Activated CD8-positive, alpha-beta T cell treated with anti-CD3 and anti-CD28 coated beads for 36 hours (primary cell): ENCODE measurements at regions of chr2 and their contacts with region 1.

Region 1: DNA sequence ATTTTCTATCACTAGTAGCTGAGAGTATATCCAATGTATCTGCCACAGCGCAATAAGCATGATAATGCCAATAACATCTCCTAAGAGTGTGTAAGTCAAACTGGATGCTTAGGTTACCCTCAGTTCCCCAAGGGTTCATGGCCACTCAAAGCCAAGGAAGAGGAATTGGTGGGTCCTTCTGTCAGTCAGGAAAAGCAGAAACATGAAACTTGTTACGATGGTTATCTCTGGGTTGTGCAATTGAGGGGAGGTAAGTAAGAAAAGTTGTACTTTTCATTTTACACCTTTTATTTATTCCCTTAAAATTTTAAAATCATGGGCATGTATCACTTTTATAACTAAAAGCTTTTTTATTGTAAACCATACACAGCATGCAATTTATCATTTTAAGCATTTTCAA is 10.1 kb upstream of the GAD1 start:
- DNase-seq: no peak
- ATAC-seq: no peak
- H3K4me3 Mint-ChIP-seq: no peak overlapping the region
- H3K27ac Mint-ChIP-seq: no peak overlapping the region
- H3K4me1 Mint-ChIP-seq: no peaks in the 10 kb centered on the region
- H3K27me3 Mint-ChIP-seq: peaks cover 5% of the 10 kb centered on the region
- CTCF ChIP-seq: no peak

Region 2: GRCh38 chr2:170243118-170243837 is 563.3 kb before region 1 on chr2:
- CTCF ChIA-PET with region 1: no interaction called
- POLR2A ChIA-PET with region 1: no interaction called
- intact Hi-C with region 1: loop called (anchors 5 kb)
- DNase-seq: no peak
- ATAC-seq: no peak
- H3K4me3 Mint-ChIP-seq: no peak overlapping the region
- H3K27ac Mint-ChIP-seq: no peak overlapping the region
- H3K4me1 Mint-ChIP-seq: no peaks in the 10 kb centered on the region
- H3K27me3 Mint-ChIP-seq: peaks cover 20% of the 10 kb centered on the region
- CTCF ChIP-seq: no peak